ENCODE measurements at regions of chr3 and their contacts with region 1.

Region 1: DNA sequence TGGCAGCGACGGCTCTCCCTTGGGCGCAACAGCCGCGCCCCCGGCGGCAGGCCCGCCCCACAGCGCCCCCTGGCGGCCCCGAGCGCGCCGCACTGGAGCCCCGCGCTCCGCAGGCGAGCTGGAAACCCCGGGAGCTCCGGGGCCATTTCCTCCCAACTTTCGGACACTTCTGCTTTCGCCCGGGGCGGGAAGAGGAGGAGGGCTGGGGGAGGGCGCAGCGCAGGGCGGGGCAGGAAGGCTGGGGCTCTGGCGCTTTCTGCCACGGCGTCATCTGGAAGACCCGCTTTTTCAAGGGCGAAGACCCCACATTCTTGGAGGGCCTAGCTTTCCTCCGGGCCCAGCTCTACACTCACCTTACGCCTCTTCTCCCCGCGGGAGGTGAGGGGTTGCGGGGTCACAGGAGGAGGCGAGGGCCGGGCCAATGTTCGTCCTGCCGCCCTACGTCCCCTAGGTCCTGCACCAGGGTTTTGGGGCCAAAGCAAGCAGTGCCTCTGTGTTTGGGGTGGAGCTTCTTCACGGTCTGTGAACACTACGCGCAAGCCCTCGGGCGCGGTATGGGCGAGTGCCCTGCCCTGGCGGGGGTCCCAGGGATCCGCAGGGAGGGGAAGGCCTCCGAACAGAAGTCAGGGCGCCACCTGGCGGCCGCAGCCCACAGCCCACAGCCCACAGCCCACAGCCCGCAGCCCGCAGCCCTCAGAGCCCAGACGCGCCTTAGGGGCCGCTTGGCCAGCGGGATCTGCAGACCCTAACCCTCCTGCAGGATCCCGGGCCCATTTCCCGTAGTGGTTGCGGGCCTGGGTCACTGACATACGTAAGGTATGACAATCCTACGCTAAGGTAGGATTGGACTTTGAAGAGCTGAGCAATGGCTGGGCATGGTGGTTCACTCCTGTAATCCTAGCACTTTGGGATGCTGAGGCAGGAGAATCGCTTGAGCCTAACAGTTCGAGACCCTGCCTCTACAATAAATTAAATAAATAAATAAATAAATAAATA is 31.1 kb downstream of the FOXL2 start:
- DNase-seq: peak; percentile 75
- H3K4me3 ChIP-seq: peak overlapping the region; percentile 90
- H3K27ac ChIP-seq: peak overlapping the region; percentile 95
- H3K27me3 ChIP-seq: no peaks in the 10 kb centered on the region
- CTCF ChIP-seq: peak; percentile 76

Region 2: DNA sequence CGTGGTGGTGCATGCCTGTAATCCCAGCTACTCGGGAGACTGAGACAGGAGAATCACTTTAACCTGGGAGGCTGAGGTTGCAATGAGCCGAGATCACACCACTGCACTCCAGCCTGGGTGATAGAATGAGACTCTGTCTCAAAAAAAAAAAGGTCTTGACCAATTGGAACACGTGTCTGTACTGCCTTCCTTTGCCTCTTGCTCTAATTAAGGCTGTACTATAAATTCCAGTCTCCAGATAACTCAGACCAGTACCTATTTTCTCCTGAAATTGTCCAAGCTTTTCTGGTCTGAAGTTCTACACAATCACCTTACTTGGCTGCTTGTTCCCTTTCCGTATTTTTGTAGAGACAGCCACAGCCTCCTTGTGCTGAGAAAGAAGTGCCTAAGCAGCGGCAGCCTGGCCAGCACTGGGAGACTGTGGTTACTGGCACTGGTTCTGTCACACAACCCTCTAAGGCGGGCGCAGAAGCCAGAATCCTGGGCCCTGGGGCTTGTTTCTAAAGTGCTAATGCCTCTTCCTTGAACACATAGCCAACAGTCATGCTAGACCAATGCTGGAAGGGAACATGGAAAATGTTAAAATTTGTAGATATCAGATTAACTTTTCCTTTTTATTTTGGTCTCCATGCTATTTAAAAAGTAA is 315.6 kb before region 1 on chr3:
- CTCF ChIA-PET with region 1: interaction called, 560 read pairs
- POLR2A ChIA-PET with region 1: interaction called, 5 read pairs
- DNase-seq: no peak
- H3K4me3 ChIP-seq: no peak overlapping the region
- H3K27ac ChIP-seq: no peak overlapping the region
- H3K27me3 ChIP-seq: no peaks in the 10 kb centered on the region
- CTCF ChIP-seq: no peak

Region 3: GRCh38 chr3:138681463-138682220 is 234.2 kb before region 1 on chr3:
- CTCF ChIA-PET with region 1: interaction called, 794 read pairs
- POLR2A ChIA-PET with region 1: interaction called, 5 read pairs
- DNase-seq: no peak
- H3K4me3 ChIP-seq: no peak overlapping the region
- H3K27ac ChIP-seq: no peak overlapping the region
- H3K27me3 ChIP-seq: no peaks in the 10 kb centered on the region
- CTCF ChIP-seq: no peak

Region 4: DNA sequence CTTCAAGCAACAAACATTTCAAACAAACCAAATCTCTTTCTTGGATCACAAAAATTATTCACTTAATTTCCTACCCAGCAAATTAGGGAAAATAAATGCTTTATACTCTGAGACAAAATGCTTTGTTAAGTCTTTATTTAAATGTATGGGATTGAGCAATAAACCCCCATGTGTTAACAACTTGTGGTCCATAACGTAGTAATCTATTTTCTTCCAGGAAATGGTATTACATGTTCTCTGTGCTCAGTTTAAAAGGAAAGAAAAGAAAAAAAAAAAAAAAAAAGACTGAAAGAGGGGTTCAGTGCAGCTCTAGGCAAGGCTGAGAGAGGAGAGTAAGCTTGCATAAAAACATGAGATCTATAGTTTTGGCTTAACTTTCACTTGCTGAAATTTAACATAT is 183.3 kb before region 1 on chr3:
- CTCF ChIA-PET with region 1: interaction called, 18 read pairs
- POLR2A ChIA-PET with region 1: no interaction called
- DNase-seq: no peak
- H3K4me3 ChIP-seq: no peak overlapping the region
- H3K27ac ChIP-seq: no peak overlapping the region
- H3K27me3 ChIP-seq: no peaks in the 10 kb centered on the region
- CTCF ChIP-seq: no peak

Region 5: DNA sequence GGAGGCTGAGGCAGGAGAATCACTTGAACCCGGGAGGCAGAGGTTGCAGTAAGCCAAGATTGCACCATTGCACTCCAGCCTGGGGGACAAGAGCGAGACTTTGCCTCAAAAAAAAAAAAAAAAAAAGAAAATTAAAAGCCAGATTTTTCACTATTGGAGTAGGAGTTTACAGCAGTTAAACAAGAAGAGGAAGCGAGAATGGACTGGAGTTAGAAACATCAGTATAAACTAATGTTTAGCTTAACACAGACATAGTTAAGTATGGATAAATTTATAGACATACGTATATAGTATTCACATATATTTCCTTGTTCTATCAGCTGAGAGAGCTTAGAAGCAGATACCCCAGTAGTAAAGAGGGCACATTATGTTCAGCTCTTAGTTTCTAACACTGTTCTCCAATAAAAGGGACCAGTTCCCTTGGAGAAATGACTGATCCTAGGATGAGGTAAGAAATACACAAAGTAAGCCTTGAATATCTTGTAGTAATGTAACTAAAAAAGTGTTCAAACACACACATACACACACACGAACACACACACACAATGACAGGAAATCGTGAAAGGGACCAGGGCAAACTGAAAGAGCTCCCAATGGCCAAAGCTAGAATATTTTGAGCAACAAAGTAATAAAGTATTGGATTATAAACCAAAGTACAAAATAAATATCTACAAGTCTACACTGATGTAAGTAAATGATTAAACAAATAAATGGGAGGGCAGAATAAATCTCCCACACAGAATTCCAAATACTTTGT is 106.1 kb before region 1 on chr3:
- CTCF ChIA-PET with region 1: interaction called, 13 read pairs
- POLR2A ChIA-PET with region 1: no interaction called
- DNase-seq: no peak
- H3K4me3 ChIP-seq: no peak overlapping the region
- H3K27ac ChIP-seq: no peak overlapping the region
- H3K27me3 ChIP-seq: no peaks in the 10 kb centered on the region
- CTCF ChIP-seq: no peak

Region 6: DNA sequence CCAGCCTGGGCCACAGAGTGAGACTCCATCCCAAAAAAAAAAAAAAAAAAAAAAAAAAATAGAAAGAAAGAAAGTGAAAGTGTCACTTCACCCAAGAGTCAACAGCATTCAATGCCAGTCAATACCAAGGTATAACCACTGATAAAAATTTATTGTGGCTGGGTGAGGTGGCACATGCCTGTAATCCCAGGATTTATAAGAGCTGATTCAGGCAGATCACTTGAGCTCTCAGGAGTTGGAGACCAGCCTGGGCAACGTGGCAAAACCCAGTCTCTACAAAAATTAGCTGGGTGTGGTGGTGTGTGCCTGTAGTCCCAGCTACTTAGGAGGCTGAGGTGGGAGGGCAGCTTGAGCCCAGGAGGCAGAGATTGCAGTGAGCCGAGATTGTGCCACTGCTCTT is 34.6 kb before region 1 on chr3:
- CTCF ChIA-PET with region 1: interaction called, 14 read pairs
- POLR2A ChIA-PET with region 1: no interaction called
- DNase-seq: no peak
- H3K4me3 ChIP-seq: no peak overlapping the region
- H3K27ac ChIP-seq: no peak overlapping the region
- H3K27me3 ChIP-seq: no peaks in the 10 kb centered on the region
- CTCF ChIP-seq: no peak

Region 7: GRCh38 chr3:139032326-139033002 is 116.7 kb after region 1 on chr3:
- CTCF ChIA-PET with region 1: no interaction called
- POLR2A ChIA-PET with region 1: no interaction called
- DNase-seq: no peak
- H3K4me3 ChIP-seq: no peak overlapping the region
- H3K27ac ChIP-seq: no peak overlapping the region
- H3K27me3 ChIP-seq: no peaks in the 10 kb centered on the region
- CTCF ChIP-seq: no peak

Region 8: DNA sequence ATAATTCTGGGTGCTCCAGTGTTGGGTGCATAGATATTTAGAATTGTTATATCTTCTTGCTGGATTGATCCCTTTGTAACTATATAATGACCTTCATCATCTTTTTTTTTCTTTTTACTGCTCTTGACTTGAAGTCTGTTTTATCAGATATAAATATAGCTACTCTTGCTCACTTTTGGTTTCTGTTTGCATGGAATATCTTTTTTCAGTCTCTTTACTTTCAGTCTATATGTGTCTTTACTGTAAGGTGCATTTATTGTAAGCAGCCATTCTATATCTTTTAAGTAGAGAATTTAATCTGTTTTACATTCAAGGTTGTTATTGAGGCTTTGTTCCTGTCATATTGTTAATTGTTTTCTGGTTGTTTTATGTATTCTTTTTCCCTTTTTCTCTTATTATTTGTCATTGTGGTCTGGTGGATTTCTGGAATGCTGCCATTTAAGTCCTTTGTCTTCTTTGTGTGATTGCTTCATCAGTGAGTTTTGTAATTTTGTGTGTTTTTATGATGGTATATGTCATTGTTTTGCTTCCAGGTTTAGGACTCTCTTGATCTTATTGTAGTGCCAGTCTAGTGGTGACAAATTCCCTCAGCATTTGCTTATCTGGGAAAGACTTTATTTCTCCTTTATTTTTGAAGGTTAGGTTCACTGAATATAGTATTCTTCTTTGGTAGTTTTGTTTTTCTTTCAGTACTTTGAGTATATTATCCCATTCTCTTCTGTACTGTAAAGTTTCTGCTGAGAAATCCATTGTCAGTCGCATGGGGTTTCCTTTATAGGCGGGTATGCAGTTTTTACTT is 137.2 kb after region 1 on chr3:
- CTCF ChIA-PET with region 1: no interaction called
- POLR2A ChIA-PET with region 1: no interaction called
- DNase-seq: no peak
- H3K4me3 ChIP-seq: no peak overlapping the region
- H3K27ac ChIP-seq: no peak overlapping the region
- H3K27me3 ChIP-seq: no peaks in the 10 kb centered on the region
- CTCF ChIP-seq: no peak